ENCODE measurements at regions of chr14 and their contacts with region 1.

Region 1: GRCh38 chr14:32939254-32940065 is 781 bp downstream of the NPAS3 start:
- DNase-seq: peak; percentile 93
- H3K4me3 ChIP-seq: peak overlapping the region; percentile 76
- H3K27ac ChIP-seq: peak overlapping the region; percentile 98
- H3K4me1 ChIP-seq: peaks cover 54% of the 10 kb centered on the region
- H3K27me3 ChIP-seq: no peaks in the 10 kb centered on the region
- CTCF ChIP-seq: no peak

Region 2: GRCh38 chr14:32623300-32624093 is 316.0 kb before region 1 on chr14:
- CTCF ChIA-PET with region 1: no interaction called
- POLR2A ChIA-PET with region 1: interaction called, 14 read pairs
- intact Hi-C with region 1: no loop called
- DNase-seq: peak; percentile 50
- H3K4me3 ChIP-seq: no peak overlapping the region
- H3K27ac ChIP-seq: no peak overlapping the region
- H3K4me1 ChIP-seq: peaks cover 4% of the 10 kb centered on the region
- H3K27me3 ChIP-seq: no peaks in the 10 kb centered on the region
- CTCF ChIP-seq: no peak

Region 3: DNA sequence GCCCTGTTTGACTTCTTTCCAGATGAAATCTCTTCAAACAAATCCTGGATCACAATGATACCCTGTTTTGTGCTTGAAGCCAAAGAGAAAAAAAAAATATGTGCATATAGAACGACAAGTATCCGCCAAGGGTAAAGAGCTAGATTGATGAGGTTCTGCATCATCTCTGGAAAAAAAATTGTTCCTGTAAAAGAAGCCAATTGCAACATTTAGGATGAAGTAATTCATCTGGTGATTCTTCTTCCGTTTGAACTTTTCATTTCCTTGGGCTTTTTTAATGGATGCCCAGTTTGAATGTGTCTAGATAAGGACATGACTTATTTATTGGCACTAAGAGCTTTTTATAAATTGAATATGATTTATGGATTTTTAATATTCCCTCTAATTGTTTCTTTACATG is 38.9 kb before region 1 on chr14:
- CTCF ChIA-PET with region 1: no interaction called
- POLR2A ChIA-PET with region 1: no interaction called
- intact Hi-C with region 1: no loop called
- DNase-seq: no peak
- H3K4me3 ChIP-seq: no peak overlapping the region
- H3K27ac ChIP-seq: no peak overlapping the region
- H3K4me1 ChIP-seq: peaks cover 4% of the 10 kb centered on the region
- H3K27me3 ChIP-seq: no peaks in the 10 kb centered on the region
- CTCF ChIP-seq: no peak

Region 4: GRCh38 chr14:32986791-32987540 is 47.5 kb after region 1 on chr14:
- CTCF ChIA-PET with region 1: interaction called, 6 read pairs
- POLR2A ChIA-PET with region 1: no interaction called
- intact Hi-C with region 1: loop called (anchors 2 kb)
- DNase-seq: peak; percentile 90
- H3K4me3 ChIP-seq: peak overlapping the region; percentile 1
- H3K27ac ChIP-seq: peak overlapping the region; percentile 93
- H3K4me1 ChIP-seq: peaks cover 60% of the 10 kb centered on the region
- H3K27me3 ChIP-seq: no peaks in the 10 kb centered on the region
- CTCF ChIP-seq: no peak

Region 5: GRCh38 chr14:33280646-33281045 is 341.2 kb after region 1 on chr14:
- CTCF ChIA-PET with region 1: no interaction called
- POLR2A ChIA-PET with region 1: no interaction called
- intact Hi-C with region 1: loop called (anchors 10 kb)
- DNase-seq: peak; percentile 69
- H3K4me3 ChIP-seq: peak overlapping the region; percentile 6
- H3K27ac ChIP-seq: no peak overlapping the region
- H3K4me1 ChIP-seq: peaks cover 21% of the 10 kb centered on the region
- H3K27me3 ChIP-seq: no peaks in the 10 kb centered on the region
- CTCF ChIP-seq: no peak

Region 6: DNA sequence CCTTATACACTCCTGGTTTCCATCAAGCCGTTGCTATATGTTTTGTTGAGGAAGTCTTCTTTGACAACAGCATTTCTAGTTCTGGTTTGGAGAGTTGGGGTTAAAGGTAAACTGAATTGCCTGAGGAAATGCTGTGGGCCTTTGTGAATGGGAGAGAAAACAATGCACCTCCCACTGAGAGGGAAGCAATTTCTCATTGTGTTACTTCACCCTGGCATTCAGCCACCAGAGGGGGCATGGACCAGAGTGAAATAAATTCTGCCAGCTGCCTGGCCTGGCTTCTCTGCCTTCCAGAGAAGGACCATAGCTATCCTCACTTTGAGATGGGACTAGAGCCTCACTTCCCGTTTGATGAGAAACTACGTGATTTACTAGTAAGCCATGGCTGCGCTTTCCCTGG is 536.2 kb after region 1 on chr14:
- CTCF ChIA-PET with region 1: no interaction called
- POLR2A ChIA-PET with region 1: no interaction called
- intact Hi-C with region 1: loop called (anchors 5 kb)
- DNase-seq: peak; percentile 80
- H3K4me3 ChIP-seq: no peak overlapping the region
- H3K27ac ChIP-seq: no peak overlapping the region
- H3K4me1 ChIP-seq: peaks cover 51% of the 10 kb centered on the region
- H3K27me3 ChIP-seq: no peaks in the 10 kb centered on the region
- CTCF ChIP-seq: peak; percentile 47; the same call in 1 of the 2 replicates

Measured in A673 (cell line).